ENCODE measurements at regions of chr11 and their contacts with region 1.

Region 1: GRCh38 chr11:72238040-72238450 is 5.9 kb downstream of the PHOX2A start:
- DNase-seq: peak in 7 of 9 donors; percentile 25 to 47 (median 32)
- ATAC-seq: peak; percentile 69
- H3K4me3 ChIP-seq: no peak overlapping the region
- H3K4me3 Mint-ChIP-seq: peak overlapping the region in 1 of 10 donors; percentile 1
- H3K27ac ChIP-seq: no peak overlapping the region
- H3K27ac Mint-ChIP-seq: no peak overlapping the region
- H3K4me1 ChIP-seq: peaks cover 0 to 15% of the 10 kb centered on the region in 2 donors
- H3K4me1 Mint-ChIP-seq: peaks cover 11 to 33% (median 27%) of the 10 kb centered on the region in 7 donors
- H3K27me3 ChIP-seq: peaks cover 0 to 21% of the 10 kb centered on the region in 2 donors
- H3K27me3 Mint-ChIP-seq: peaks cover 26 to 39% (median 35%) of the 10 kb centered on the region in 5 donors

Region 2: GRCh38 chr11:72179804-72180396 is 58.1 kb before region 1 on chr11:
- CTCF ChIA-PET with region 1: no interaction called
- POLR2A ChIA-PET with region 1: no interaction called
- intact Hi-C with region 1: loop called in 1 of 2 experiments (anchors 1 kb)
- DNase-seq: no peak
- ATAC-seq: no peak
- H3K4me3 ChIP-seq: no peak overlapping the region
- H3K4me3 Mint-ChIP-seq: no peak overlapping the region
- H3K27ac ChIP-seq: no peak overlapping the region
- H3K27ac Mint-ChIP-seq: no peak overlapping the region
- H3K4me1 ChIP-seq: no peaks in the 10 kb centered on the region
- H3K4me1 Mint-ChIP-seq: peaks cover 0 to 5% (median 3%) of the 10 kb centered on the region in 7 donors
- H3K27me3 ChIP-seq: no peaks in the 10 kb centered on the region
- H3K27me3 Mint-ChIP-seq: peaks cover 6 to 24% (median 10%) of the 10 kb centered on the region in 5 donors

Region 3: DNA sequence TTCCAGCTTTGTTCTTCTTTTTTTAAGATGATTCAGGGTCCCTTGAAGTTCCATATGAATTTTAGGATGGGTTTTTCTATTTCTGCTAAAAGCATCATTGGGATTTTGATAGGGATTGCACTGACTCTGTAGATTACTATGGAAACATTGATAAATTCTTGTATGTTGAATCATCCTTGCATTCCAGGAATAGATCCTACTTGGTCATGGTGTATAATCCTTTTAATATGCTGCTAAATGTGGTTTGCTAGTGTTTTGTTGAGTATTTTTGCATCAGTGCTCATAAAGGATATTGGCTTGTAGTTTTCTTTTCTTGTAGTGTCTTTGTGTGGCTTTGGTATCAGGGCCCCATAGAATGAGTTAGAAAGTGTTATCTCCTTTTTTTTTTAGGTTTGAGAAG is 40.9 kb after region 1 on chr11:
- CTCF ChIA-PET with region 1: no interaction called
- POLR2A ChIA-PET with region 1: no interaction called
- intact Hi-C with region 1: no loop called
- DNase-seq: no peak
- ATAC-seq: no peak
- H3K4me3 ChIP-seq: no peak overlapping the region
- H3K4me3 Mint-ChIP-seq: no peak overlapping the region
- H3K27ac ChIP-seq: no peak overlapping the region
- H3K27ac Mint-ChIP-seq: no peak overlapping the region
- H3K4me1 ChIP-seq: no peaks in the 10 kb centered on the region
- H3K4me1 Mint-ChIP-seq: no peaks in the 10 kb centered on the region
- H3K27me3 ChIP-seq: no peaks in the 10 kb centered on the region
- H3K27me3 Mint-ChIP-seq: peaks cover 32 to 44% (median 39%) of the 10 kb centered on the region in 5 donors